Right ventricle myocardium inferior (tissue), 1 donor: ENCODE measurements at regions of chr17 and their contacts with region 1.

Region 1: GRCh38 chr17:59435238-59435637 is 103.8 kb downstream of the YPEL2 start:
- DNase-seq: no peak
- ATAC-seq: no peak

Region 2: GRCh38 chr17:59361916-59362810 is 73.1 kb before region 1 on chr17:
- intact Hi-C with region 1: loop called (anchors 5 kb)
- DNase-seq: no peak
- ATAC-seq: no peak

Region 3: DNA sequence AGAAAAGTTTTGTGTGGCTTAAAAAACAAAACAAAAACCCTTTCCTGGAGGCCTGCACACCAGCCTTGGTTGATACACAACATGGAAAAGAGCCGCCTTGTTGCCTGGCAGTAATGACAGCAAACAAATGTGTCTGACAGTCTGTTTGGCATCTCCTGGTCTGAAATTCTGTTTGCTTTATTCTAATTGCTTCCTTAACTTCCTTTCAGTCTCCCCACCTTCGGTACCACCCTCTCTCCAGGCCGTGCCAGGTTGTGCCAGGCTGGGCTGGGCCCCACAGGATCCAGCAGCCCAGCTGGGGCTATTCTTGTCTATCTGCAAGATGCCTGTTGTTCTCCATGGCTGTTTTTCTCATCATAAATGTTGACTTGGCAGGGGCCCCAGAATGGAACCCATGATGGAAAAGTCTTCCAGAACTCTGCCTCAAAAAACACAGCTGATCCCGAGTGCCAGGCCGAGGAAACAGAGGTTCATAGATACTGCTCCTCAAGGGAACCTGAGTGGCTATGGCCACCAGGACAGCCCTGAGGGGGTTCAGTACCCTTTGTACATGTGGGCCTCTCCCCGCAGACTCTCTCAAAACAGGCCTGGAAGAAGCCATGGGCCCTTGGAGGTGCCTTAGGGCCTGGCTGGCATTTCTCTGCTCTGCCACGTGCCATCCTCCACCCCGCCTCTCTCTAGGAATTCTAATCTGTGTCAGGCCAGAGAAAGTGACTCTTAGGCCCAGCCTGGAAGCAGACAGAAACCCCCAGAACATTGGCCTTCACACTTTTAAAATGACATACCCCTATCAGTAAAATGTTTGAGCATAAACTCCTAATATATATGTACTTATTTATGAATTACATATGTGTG is 53.3 kb before region 1 on chr17:
- intact Hi-C with region 1: loop called (anchors 5 kb)
- DNase-seq: no peak
- ATAC-seq: peak; percentile 82

Region 4: DNA sequence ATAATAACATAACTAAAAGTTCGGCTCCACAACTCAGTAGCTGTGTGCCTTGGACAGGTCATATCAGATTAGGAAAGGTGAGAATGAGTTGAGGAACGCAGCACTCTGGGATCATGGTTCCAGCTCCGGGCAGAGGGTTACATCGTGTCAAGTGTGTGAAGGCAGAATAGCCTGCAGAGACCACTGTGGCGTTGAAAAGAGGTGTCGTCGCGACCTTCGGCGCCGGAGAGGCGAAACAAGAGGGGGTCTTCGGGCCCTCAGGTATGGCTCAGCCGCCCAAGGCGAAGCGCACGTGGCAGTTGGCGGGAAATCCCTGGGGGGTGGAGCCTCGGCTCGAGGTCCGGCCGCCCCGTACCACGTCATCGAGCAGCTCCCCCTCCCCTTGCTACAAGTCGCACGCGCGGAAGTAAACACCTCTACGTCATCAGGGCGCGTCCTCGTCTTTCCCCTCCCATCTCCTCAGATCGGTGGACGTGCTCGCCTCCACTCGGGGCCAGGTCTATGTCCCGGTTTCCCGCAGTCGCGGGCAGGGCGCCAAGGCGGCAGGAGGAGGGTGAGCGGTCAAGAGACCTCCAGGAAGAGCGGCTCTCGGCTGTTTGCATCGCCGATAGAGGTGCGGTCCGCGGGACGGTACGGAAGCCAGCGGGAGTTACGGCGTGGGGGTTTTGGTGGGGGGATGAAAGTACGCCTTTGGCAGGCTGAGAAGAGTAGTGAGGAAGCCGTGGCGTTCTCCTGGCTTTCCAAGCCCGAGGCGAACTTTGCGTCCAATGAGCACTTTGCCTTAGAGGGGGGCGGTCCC is 130.1 kb after region 1 on chr17 and contains the start of gene DHX40:
- intact Hi-C with region 1: no loop called
- DNase-seq: peak; percentile 97
- ATAC-seq: peak; percentile 98
- total RNA-seq, gene DHX40: 18.0 TPM